ENCODE measurements at regions of chr6 and their contacts with region 1.

Region 1: GRCh38 chr6:162736961-162737360 is 9.2 kb downstream of the PACRG start:
- DNase-seq: no peak
- H3K4me3 ChIP-seq: no peak overlapping the region
- H3K4me3 Mint-ChIP-seq: no peak overlapping the region
- H3K27ac Mint-ChIP-seq: no peak overlapping the region
- H3K4me1 ChIP-seq: no peaks in the 10 kb centered on the region
- H3K4me1 Mint-ChIP-seq: no peaks in the 10 kb centered on the region
- H3K27me3 ChIP-seq: no peaks in the 10 kb centered on the region
- H3K27me3 Mint-ChIP-seq: peaks cover 3% of the 10 kb centered on the region
- CTCF ChIP-seq: no peak

Region 2: DNA sequence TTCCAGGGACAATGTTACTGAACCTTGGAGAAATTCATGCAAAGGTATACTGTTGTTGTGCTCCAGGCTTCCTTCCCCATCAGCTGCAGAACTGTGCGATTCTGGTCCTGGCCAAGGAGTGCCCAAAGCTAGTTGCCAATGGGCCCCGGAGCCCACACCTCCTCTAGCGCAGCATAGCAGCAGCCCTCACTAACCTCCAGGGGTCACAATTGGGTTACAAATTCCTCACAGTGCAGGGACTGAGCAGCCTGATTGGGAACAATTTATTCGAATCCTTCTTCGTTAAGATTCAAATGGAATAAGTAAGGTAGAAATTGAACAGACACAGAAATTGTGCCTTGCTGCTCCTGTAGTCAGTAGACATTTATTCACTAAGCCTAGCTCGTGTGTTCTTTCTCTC is 294.3 kb before region 1 on chr6:
- CTCF ChIA-PET with region 1: no interaction called
- POLR2A ChIA-PET with region 1: no interaction called
- intact Hi-C with region 1: loop called (anchors 2 kb)
- DNase-seq: peak in 1 of 2 experiments; percentile 35
- H3K4me3 ChIP-seq: no peak overlapping the region
- H3K4me3 Mint-ChIP-seq: no peak overlapping the region
- H3K27ac Mint-ChIP-seq: no peak overlapping the region
- H3K4me1 ChIP-seq: no peaks in the 10 kb centered on the region
- H3K4me1 Mint-ChIP-seq: no peaks in the 10 kb centered on the region
- H3K27me3 ChIP-seq: no peaks in the 10 kb centered on the region
- H3K27me3 Mint-ChIP-seq: peaks cover 15% of the 10 kb centered on the region
- CTCF ChIP-seq: peak in 1 of 2 experiments; percentile 38

Region 3: DNA sequence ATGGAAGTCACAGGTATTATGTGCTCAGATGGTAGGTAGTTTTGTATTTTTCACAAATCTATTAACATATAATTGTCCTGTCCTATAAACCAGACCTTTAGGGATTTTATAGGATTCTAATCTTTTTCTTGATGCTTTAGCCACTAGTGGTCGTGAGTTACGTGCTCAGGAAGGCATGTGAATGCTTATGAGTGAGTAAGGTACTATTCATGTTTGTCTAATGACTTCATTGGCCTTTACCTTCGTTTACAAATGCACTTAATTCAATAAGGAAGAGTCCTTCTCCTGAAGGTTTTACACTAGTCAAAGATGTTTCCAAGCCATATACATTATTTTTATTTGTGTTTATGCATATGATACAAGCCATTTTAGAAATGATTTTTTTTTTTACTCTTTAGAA is 13.8 kb after region 1 on chr6:
- CTCF ChIA-PET with region 1: no interaction called
- POLR2A ChIA-PET with region 1: no interaction called
- intact Hi-C with region 1: no loop called
- DNase-seq: no peak
- H3K4me3 ChIP-seq: no peak overlapping the region
- H3K4me3 Mint-ChIP-seq: no peak overlapping the region
- H3K27ac Mint-ChIP-seq: no peak overlapping the region
- H3K4me1 ChIP-seq: no peaks in the 10 kb centered on the region
- H3K4me1 Mint-ChIP-seq: no peaks in the 10 kb centered on the region
- H3K27me3 ChIP-seq: no peaks in the 10 kb centered on the region
- H3K27me3 Mint-ChIP-seq: no peaks in the 10 kb centered on the region
- CTCF ChIP-seq: no peak

Region 4: GRCh38 chr6:162887981-162888689 is 151.2 kb after region 1 on chr6:
- CTCF ChIA-PET with region 1: no interaction called
- POLR2A ChIA-PET with region 1: no interaction called
- intact Hi-C with region 1: no loop called
- DNase-seq: no peak
- H3K4me3 ChIP-seq: no peak overlapping the region
- H3K4me3 Mint-ChIP-seq: no peak overlapping the region
- H3K27ac Mint-ChIP-seq: no peak overlapping the region
- H3K4me1 ChIP-seq: no peaks in the 10 kb centered on the region
- H3K4me1 Mint-ChIP-seq: no peaks in the 10 kb centered on the region
- H3K27me3 ChIP-seq: no peaks in the 10 kb centered on the region
- H3K27me3 Mint-ChIP-seq: no peaks in the 10 kb centered on the region
- CTCF ChIP-seq: no peak